GM10248 (cell line): ENCODE measurements at regions of chr2 and their contacts with region 1.

Region 1: DNA sequence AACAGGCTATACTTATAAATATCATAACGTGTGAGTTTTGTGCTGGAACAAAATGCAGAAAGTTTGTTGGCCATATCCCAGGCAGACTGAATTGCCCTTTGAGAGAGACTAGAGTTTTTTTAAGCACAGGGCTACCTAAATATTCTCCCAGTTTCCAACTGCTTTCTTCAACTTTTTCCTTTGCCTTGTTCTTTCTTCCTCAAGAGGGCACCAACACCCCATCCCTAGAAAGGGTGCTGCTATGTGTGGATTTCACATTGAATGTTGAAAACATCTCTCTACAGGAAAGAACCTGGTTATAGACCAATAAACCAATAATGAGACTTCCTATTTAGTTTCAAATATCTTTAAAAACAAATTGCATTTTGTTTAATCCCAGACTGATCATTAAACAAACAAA is 87.9 kb downstream of the ICOS start:
- DNase-seq: no peak
- CTCF ChIP-seq: peak; percentile 61

Region 2: GRCh38 chr2:204012072-204012653 is 12.3 kb before region 1 on chr2:
- CTCF ChIA-PET with region 1: interaction called, 12 read pairs
- POLR2A ChIA-PET with region 1: no interaction called
- DNase-seq: no peak
- CTCF ChIP-seq: no peak

Region 3: DNA sequence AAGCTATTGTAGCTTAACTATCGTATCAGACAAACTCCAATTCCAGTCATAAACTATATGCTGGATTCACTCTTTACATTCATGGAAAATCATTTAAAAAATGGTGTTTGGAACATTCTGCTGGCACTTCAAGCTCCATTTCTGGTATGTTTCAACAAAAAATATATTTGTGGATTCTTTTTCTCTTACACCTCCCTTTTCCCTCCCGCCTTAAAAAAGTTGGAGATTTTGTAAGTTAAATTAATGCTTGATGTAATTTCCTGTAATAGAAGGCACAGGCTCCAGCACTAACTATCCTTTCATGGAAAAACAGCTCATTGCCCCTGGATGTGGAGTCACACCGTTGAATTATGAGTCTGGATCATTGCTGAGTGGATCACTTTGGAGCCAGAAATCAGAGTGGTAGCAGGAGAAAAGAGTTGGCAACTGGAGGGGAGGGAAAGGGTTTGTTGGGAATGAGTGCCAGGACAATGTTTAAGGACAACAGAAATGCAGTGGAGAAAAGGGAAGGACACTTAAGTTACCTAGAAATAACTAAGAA is 14.9 kb after region 1 on chr2:
- CTCF ChIA-PET with region 1: interaction called, 10 read pairs
- POLR2A ChIA-PET with region 1: no interaction called
- DNase-seq: no peak
- CTCF ChIP-seq: no peak

Region 4: DNA sequence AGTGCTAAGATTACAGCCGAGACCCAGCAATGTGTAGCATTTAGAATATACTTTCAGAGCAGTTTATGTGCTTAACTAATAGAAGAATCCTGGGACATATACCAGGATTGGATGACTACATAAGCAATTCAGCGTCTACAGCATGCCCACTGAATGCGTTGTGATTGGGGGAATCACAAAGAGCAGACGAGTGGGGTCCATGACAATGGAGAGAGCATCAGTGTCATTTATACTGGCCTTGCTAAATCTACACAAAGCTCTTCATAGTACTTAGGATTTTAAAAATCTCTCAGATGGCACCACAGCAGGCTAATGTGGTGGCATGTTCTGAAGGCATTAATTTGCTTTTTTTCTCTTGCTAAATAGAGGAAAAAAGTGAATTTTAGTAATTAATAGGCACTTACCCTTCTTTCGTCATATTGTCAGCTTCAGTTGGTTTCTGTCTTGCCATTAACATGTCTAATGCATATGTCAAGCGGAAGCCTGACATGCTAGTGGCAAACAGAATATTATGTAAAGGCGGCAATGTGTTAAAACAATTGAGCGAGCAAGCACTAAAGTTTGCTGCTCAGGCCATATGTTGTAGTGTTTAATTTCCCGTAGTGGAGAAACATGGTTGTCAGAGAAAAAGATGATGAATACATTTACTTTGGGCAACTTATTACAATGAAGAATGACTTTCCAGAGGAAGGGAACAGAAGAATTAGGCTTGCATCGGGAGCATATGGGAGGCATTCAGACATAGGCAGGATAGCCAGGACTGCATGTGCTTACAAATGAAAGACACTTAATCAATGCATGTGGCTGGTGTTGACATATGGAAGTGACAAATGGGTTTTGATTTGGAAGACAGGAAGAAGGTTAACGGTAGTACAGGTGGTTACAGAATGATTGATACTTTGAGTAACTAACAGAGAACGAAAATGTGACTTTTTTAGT is 57.3 kb after region 1 on chr2:
- CTCF ChIA-PET with region 1: no interaction called
- POLR2A ChIA-PET with region 1: no interaction called
- DNase-seq: no peak
- CTCF ChIP-seq: no peak